Head of caudate nucleus (tissue), 42 donors: ENCODE measurements at regions of chr11 and their contacts with region 1.

Region 1: GRCh38 chr11:85941380-85941973 is 86.3 kb downstream of the CCDC83 start:
- DNase-seq: peak; percentile 34 to 89 (median 72)

Region 2: DNA sequence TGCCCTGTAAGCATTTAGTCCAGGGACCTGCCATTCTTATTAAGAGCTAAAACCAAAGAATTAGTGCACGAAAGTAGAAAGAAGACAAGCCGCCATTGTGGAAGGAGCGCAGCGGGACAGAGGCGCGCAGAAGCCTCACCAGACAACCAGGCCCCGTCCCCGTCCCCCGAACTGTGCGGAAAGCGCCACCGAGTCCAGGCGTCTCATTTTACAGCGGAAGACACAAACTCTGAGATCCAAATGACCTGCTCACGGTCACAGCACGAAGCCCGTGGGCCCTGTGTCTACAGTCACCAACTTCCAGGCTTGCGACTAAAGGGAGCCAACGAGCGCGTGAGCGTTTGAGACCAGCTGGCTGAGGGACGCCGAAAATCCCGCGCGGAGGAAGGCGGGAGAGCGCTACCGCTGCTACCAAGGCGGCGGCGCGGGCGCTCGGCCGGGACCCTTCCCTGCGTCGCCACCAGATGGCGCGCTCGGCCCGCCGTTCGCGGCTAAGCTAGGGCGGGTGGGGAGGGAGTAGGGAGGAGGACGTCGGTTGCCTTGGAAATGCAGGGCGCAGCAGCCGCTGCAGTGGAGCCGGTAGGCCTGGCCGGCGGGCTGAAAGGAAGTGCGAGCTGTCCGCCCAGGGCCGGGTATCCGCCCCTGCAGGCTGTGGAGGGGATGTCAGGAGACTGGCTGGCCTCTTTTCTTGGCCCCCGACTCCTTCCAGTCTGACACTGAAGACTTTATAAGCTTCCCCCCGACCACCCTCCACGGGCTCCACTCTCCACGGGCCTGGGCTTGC is 86.7 kb before region 1 on chr11:
- intact Hi-C with region 1: loop called (anchors 10 kb)
- DNase-seq: peak; percentile 76 to 95 (median 88)

Region 3: GRCh38 chr11:86041975-86042378 is 100.5 kb after region 1 on chr11:
- intact Hi-C with region 1: loop called (anchors 10 kb)
- DNase-seq: peak in 30 of 42 donors; percentile 12 to 87 (median 66)

Region 4: GRCh38 chr11:86202013-86202336 is 260.5 kb after region 1 on chr11:
- intact Hi-C with region 1: loop called (anchors 5 kb)
- DNase-seq: no peak

Region 5: DNA sequence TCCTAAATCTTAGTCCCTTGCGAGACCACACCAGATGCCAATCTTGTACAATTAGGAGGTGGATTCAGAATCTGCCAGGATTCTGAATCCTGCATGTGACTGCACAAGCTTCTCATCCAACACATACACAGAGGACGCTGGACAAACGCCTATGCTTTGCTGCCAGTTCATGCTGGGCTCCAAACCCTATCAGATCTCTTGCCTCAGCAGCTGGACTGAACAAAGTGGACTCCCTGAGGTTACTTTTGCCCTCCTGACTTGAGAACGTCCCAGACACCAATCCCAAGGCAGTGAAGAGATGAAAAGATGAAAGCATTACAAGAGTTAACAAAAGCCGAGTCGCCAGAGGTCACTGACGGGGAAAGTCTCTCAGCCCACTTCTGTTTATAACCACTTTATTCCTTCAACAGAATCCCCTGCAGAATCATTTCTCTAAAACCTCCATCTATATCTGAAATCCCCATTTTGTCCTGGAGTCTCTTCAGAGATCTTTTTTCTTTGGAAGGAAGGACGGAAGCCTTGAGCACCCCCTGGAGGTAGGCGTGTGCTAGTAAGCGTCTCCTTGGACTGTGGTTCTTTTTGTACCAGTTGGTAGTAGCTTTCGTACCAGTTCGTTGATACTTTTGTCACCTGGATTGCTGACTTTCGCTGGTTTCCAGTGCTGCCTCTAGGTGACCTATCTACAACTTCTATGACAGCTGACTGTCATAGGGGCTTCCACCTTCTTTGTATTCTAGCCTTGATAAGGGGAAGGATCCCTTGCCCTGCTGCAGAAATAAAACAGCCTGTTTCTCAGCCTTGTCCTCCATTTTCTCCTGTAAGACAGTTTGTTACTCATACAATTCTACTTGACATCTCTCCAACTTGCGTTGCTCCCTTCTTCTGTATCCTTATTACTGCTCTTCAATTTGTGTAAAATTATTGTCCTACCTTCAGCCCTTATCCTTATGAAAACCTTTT is 276.9 kb after region 1 on chr11:
- intact Hi-C with region 1: loop called (anchors 5 kb)
- DNase-seq: peak; percentile 17 to 90 (median 74)

Region 6: DNA sequence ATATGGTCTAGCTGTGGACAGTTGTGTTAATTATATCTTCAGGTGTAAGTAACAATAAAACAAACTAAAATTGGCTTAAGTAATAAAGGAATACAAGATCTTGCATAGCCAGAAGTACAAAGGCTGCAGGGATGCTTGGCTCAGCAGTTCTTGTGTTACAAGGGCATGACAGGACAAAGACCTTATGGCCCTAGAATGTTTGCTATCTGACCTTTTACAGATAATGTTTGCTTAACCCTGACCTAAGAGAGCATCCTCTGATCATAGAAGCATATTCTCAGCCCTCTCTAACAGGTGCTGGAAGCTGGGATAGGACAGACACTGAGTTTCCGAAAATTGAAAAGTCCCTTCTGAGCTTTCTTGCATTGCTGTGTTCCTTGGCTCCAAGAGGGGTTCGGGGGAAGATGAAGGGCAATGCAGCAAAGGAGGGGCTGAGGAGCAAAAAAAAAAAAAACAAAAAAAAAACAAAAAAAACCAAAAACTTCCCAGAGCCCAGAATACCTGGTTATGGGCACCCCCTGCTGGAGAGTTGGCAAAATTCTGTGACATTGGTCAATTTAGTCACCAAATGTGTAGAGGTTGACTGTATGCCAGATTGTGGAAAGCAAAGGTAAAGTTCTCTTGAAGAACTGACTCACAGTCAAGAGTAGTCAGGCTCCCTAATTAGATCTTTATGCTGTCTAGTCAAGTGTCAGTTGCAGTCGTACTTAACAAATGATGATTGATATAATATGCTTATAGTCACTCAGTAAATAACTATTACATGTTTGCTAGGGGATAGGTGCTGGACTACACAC is 350.2 kb after region 1 on chr11:
- intact Hi-C with region 1: loop called (anchors 10 kb)
- DNase-seq: peak in 37 of 42 donors; percentile 15 to 80 (median 53)